Mammary epithelial cell (primary cell): ENCODE measurements at regions of chr19 and their contacts with region 1.

Region 1: DNA sequence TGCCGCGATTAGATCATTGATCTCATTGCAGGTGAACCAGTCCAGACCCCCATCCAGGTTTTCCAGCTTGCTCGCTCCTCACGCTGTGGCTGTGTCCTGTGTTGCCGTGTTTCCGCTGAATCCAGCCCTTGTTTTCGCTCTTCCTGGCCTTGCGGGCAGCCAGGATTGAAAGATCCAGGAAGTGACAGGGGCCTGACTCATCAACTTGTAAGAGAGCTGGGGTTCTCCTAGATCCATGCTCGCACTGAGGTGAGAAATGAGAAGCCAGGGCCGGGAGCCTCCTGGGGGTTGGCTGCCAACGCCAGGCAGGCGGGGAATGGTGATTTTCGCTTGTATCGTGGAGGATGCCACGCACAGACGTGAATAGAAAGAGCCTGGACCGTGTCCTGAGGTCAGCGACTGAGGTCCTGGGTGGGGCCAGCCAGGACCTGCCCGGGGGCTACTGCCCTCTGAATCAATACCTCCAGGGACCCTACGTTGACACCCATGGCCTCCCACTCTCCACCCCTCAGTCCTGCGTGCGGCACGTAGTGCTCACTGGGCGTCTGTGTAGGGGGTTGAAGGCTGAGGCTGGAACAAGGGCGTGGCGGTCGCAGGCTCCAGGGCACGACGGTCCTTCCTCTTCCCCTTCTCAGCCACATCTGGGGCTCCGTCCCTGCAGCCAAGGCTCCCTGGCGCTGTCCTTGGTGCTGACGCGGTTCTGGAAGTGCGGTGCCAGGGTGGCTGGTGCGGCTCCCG is 7.3 kb upstream of the PTPRH start:
- DNase-seq: peak; percentile 99
- H3K4me3 ChIP-seq: peak overlapping the region; percentile 37 to 64 (median 49)
- H3K27ac ChIP-seq: peak overlapping the region; percentile 70
- H3K4me1 ChIP-seq: peaks cover 9% of the 10 kb centered on the region
- H3K27me3 ChIP-seq: no peaks in the 10 kb centered on the region
- CTCF ChIP-seq: no peak

Region 2: DNA sequence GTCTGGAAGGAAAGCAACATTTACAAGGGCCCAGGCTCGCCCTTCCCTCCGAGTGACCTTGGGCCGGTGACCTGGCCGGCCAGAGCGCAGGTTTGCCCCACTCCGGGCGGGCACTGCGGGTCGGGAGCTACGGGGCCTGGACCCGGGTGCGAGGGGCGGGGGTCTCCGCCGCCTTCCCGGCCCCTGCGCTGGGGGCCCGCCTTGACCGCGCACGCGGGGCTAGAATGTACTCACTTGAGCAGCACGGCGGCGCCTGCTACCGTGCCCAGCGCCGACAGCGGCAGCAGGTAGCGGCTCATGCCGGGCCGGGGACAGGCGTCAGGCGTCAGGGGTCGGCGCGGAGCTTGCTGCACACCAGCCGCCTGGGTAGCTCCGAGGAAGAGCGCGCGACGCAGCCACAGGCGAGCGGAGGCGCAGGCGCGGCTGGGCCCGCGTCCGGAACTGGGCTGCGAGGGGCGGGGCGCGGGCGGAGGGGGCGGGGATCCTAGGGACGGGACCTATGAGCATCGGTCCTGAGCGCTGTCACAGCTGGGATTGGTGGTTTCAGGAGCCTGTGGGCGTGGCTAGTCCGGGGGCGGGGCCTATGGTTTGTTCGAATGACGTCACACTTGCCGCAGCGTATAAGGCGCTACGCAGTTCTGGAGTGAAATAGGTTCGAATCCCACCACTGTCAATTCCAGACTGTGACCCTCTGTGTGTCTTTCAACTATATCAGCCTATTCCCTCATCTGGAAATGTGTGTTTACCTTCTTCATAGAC is 153.7 kb before region 1 on chr19 and contains the start of gene RDH13:
- CTCF ChIA-PET with region 1: no interaction called
- dilution Hi-C with region 1: no loop called
- in situ Hi-C with region 1: no loop called
- intact Hi-C with region 1: no loop called
- DNase-seq: peak; percentile 90
- H3K4me3 ChIP-seq: peak within 1 kb of the TSS; percentile 88 to 90 (median 90)
- H3K27ac ChIP-seq: peak within 1 kb of the TSS; percentile 41
- H3K4me1 ChIP-seq: peaks cover 2% of the 10 kb centered on the region
- H3K27me3 ChIP-seq: no peaks in the 10 kb centered on the region
- CTCF ChIP-seq: no peak
- total RNA-seq, gene RDH13: 18.0 to 19.8 TPM

Region 3: DNA sequence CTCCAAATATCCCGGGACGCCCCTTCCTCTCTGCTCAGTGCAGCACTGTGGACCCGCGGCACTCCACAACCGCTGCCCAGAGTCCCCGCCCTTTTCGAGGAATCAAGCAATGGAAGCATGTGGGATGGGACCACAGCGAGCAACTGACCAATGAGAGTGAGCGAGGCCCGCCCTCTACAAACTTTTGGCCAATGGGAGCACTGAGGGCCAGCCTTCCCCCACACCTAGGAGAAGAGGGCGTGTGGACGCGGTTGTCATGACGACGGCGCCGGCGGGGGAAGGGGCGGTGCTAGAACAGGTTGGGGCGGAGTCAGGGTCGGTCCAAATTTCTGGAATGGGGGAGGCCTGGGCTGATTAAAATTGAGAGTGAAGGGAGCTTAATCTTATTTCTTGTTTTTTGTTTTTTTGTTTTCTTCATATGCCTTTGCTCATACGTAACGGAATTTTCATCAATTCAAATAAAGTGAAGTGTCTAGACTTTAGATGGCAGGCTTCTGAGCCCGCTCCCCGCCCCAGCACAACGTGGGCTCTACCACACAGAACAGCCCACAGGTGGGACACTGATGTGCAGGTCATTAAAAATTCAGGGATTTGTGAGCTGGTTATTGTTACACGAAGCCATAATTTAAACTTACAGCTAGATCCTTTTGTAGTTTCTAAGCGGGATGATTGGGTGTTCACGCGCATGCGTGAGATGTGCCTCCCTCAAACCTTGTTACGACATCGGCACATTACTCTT is 49.9 kb before region 1 on chr19 and contains the start of gene DNAAF3:
- CTCF ChIA-PET with region 1: no interaction called
- dilution Hi-C with region 1: loop called (anchors 5 kb)
- in situ Hi-C with region 1: no loop called
- intact Hi-C with region 1: loop called (anchors 2 kb)
- DNase-seq: peak; percentile 97
- H3K4me3 ChIP-seq: peak within 1 kb of the TSS; percentile 49 to 67 (median 61)
- H3K27ac ChIP-seq: peak within 1 kb of the TSS; percentile 69
- H3K4me1 ChIP-seq: peaks cover 9% of the 10 kb centered on the region
- H3K27me3 ChIP-seq: peaks cover 2% of the 10 kb centered on the region
- CTCF ChIP-seq: no peak
- total RNA-seq, gene DNAAF3: 1.5 to 2.2 TPM

Region 4: DNA sequence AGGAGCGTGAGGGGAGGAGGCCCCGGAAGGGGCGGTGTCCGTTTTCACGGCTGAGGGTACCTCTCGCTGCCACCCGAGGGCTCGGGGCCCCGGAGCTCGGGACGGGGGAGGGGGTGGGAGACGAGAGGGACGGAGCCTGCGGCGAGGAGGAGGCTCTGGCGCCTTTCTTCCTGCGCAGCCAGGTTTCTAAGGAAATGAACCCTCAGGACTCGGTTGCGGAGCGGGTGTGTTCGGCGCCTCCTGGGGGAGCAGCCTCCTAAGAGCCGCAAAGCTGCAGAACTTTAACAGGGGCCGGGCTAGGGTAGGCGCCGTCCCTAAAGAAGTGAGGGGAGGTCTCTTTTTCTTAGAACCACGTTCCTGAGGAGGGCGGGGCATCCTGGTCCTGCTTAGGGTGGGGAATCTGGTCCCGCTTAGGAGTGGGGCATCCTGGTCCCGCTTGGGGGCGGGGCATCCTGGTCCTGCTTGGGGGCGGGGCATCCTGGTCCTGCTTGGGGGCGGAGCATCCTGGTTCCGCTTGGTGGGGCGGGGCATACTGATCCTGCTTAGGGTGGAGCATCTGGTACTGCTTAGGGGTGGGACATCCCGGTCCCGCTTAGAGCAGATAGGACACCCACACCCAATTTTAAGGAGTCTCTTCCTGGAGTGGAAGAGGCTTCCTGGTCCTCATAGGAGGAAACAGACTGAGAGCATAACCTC is 42.8 kb before region 1 on chr19:
- CTCF ChIA-PET with region 1: no interaction called
- dilution Hi-C with region 1: loop called (anchors 5 kb)
- in situ Hi-C with region 1: no loop called
- intact Hi-C with region 1: loop called (anchors 1 kb)
- DNase-seq: peak; percentile 30
- H3K4me3 ChIP-seq: peak overlapping the region; percentile 56 to 69 (median 59)
- H3K27ac ChIP-seq: no peak overlapping the region
- H3K4me1 ChIP-seq: peaks cover 15% of the 10 kb centered on the region
- H3K27me3 ChIP-seq: no peaks in the 10 kb centered on the region
- CTCF ChIP-seq: peak in 1 of 2 donors; percentile 33

Region 5: DNA sequence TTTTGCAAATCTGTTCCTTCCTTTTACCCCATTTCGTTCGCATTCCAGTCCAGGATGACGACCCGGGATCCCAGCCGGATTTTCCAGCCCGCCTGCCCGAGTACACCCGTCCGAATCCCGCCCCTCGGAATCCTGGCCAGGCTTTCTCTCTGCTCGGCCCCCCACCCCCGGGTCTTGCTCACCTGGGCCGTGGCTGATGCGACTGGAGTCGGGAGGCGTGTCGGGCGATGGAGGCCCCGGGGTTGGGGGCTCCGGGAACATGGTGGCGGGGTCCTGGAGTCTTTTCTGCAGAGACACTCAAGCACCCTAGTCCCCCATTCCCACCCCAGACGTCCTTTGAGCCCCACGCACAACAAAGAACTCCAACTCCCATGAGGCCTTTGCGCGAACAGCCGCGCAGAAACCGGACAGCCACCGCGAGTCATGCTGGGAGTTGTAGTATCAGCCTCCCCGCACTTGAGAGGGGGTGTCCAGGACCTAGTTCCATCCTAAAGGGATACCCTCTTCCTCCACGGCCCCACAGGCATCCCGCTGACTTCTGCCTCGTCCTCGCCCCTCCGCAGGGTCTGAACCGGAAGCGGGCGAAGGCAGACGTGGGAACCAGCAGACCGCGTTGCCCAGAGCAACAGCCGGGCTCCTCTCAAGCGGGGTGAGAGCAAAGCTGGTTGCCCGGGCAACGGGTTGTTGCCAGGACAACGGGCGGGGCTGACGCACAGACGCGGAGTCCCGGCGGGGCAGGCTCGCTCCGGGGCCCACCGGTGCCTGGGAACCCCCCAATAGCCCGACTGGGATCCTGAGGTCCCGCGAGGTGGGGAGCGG is 37.6 kb before region 1 on chr19:
- CTCF ChIA-PET with region 1: no interaction called
- dilution Hi-C with region 1: loop called (anchors 5 kb)
- in situ Hi-C with region 1: no loop called
- intact Hi-C with region 1: loop called (anchors 1 kb)
- DNase-seq: peak; percentile 79
- H3K4me3 ChIP-seq: peak overlapping the region; percentile 13 to 39 (median 29)
- H3K27ac ChIP-seq: peak overlapping the region; percentile 19
- H3K4me1 ChIP-seq: peaks cover 10% of the 10 kb centered on the region
- H3K27me3 ChIP-seq: no peaks in the 10 kb centered on the region
- CTCF ChIP-seq: no peak

Region 6: DNA sequence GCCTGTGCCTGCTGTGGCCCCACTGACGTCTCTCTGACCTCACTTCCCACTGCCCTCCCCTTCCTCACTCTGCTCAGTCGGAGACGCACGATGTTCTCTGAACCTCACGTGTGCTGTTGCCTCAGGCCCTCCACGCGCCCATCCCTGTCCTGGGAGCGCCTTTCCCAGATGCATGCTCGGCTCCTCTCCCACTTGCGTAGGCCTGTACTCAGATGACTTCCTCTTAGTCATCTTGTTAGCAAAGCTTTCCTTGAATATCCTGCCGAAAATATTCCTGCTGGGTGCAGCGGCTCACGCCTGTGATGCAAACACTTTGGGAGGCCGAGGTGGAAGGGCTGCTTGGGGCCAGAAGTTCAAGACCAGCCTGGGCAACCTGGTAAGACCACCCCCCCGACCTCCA is 27.2 kb before region 1 on chr19:
- CTCF ChIA-PET with region 1: no interaction called
- dilution Hi-C with region 1: no loop called
- in situ Hi-C with region 1: no loop called
- intact Hi-C with region 1: loop called (anchors 1 kb)
- DNase-seq: peak; percentile 100
- H3K4me3 ChIP-seq: no peak overlapping the region
- H3K27ac ChIP-seq: peak overlapping the region; percentile 87
- H3K4me1 ChIP-seq: peaks cover 9% of the 10 kb centered on the region
- H3K27me3 ChIP-seq: no peaks in the 10 kb centered on the region
- CTCF ChIP-seq: no peak

Region 7: GRCh38 chr19:55339048-55339888 is 122.6 kb after region 1 on chr19 and contains the start of gene KMT5C:
- CTCF ChIA-PET with region 1: no interaction called
- dilution Hi-C with region 1: no loop called
- in situ Hi-C with region 1: no loop called
- intact Hi-C with region 1: loop called (anchors 1 kb)
- DNase-seq: peak; percentile 100
- H3K4me3 ChIP-seq: peak within 1 kb of the TSS; percentile 48 to 83 (median 61)
- H3K27ac ChIP-seq: peak within 1 kb of the TSS; percentile 99
- H3K4me1 ChIP-seq: peaks cover 48% of the 10 kb centered on the region
- H3K27me3 ChIP-seq: no peaks in the 10 kb centered on the region
- CTCF ChIP-seq: peak in 1 of 2 donors; percentile 46
- total RNA-seq, gene KMT5C: 15.6 to 18.8 TPM

Region 8: GRCh38 chr19:55353803-55354697 is 137.4 kb after region 1 on chr19:
- CTCF ChIA-PET with region 1: no interaction called
- dilution Hi-C with region 1: loop called (anchors 5 kb)
- in situ Hi-C with region 1: no loop called
- intact Hi-C with region 1: no loop called
- DNase-seq: peak; percentile 60
- H3K4me3 ChIP-seq: peak overlapping the region; percentile 47 to 59 (median 48)
- H3K27ac ChIP-seq: no peak overlapping the region
- H3K4me1 ChIP-seq: peaks cover 30% of the 10 kb centered on the region
- H3K27me3 ChIP-seq: no peaks in the 10 kb centered on the region
- CTCF ChIP-seq: no peak